ENCODE measurements at regions of chr19 and their contacts with region 1.

Region 1: DNA sequence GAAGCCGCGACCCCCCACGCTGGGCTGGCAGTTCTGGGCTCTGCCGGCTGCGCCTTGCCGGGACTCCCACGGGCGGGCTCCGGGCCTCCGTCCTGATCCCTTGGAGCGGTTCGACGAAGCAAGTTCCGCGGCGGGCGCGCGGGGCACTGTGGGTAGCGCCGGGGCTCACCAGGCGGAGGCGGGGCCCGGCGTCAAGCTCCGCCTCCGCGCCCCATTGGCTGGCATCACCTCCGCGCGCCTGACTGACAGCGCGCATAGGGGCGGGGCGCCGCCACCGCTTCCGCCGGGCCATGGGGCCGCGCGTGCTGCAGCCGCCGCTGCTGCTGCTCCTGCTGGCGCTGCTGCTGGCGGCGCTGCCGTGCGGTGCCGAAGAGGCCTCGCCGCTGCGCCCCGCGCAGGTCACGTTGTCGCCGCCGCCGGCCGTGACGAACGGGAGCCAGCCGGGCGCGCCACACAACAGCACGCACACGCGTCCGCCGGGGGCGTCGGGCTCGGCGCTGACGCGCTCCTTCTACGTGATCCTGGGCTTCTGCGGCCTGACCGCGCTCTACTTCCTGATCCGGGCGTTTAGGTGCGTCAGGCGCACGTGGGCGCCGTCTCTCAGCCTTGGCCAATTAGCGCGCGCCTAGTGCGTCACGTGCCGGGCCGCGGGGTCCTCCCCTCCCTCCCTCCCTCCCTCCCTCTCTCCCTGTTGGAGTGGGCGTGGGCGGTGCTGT is at the start of gene FAM174C:
- DNase-seq: peak; percentile 94 to 98
- ATAC-seq: peak; percentile 82 to 95 (median 85)
- H3K4me3 ChIP-seq: peak within 1 kb of the TSS; percentile 65
- H3K4me3 Mint-ChIP-seq: peak within 1 kb of the TSS; percentile 83
- H3K27ac ChIP-seq: peak within 1 kb of the TSS; percentile 91
- H3K27ac Mint-ChIP-seq: peak within 1 kb of the TSS; percentile 91 to 93
- H3K4me1 ChIP-seq: peaks cover 65% of the 10 kb centered on the region
- H3K4me1 Mint-ChIP-seq: peaks cover 40 to 57% of the 10 kb centered on the region in 2 donors
- H3K27me3 ChIP-seq: no peaks in the 10 kb centered on the region
- H3K27me3 Mint-ChIP-seq: no peaks in the 10 kb centered on the region
- CTCF ChIP-seq: no peak
- total RNA-seq, gene FAM174C: 26.6 to 33.4 (median 27.1) TPM

Region 2: DNA sequence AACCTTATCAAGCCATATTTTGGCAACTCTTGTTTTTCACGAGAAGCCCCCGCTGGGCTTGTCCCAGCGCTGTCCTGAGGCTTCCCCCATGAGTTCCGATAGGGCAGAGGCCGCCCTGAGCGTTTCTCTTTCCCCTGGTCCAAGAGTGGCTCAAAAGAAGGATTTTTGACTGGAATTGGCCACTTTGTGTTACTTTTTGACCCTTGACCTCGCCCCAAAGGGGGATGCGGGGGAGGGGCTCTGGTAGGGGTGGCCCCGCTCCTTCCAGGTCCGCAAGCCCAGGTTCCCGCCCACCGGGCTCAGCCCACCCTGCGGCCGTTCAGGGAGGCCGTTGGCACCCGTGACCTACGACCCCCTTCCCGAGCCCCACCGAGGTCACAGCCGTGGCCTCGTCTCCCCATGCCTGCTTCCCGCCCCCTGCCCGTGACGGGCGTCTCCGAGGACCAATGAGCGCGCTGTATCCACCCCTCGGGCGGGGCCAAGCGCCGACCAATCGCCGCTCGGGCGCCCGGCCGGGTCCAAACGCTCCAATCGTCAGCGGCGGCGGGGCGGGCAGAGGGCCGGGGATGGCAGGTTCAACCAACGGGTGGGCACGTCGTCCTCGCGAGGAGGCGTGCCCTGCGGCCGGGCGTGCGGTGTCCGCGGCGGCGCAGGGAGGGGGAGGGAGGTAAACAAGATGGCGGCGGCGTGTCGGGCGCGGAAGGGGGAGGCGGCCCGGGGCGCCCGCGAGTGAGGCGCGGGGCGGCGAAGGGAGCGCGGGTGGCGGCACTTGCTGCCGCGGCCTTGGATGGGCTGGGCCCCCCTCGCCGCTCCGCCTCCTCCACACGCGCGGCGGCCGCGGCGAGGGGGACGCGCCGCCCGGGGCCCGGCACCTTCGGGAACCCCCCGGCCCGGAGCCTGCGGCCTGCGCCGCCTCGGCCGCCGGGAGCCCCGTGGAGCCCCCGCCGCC is 70.0 kb before region 1 on chr19 and contains the start of gene STK11:
- intact Hi-C with region 1: no loop called
- DNase-seq: peak; percentile 98 to 100
- ATAC-seq: peak; percentile 92 to 98 (median 94)
- H3K4me3 ChIP-seq: peak within 1 kb of the TSS; percentile 55
- H3K4me3 Mint-ChIP-seq: peak within 1 kb of the TSS; percentile 96
- H3K27ac ChIP-seq: peak within 1 kb of the TSS; percentile 77
- H3K27ac Mint-ChIP-seq: peak within 1 kb of the TSS; percentile 88 to 90
- H3K4me1 ChIP-seq: peaks cover 47% of the 10 kb centered on the region
- H3K4me1 Mint-ChIP-seq: peaks cover 14 to 34% of the 10 kb centered on the region in 2 donors
- H3K27me3 ChIP-seq: no peaks in the 10 kb centered on the region
- H3K27me3 Mint-ChIP-seq: no peaks in the 10 kb centered on the region
- CTCF ChIP-seq: no peak
- total RNA-seq, gene STK11: 51.5 to 61.1 (median 54.0) TPM

Region 3: DNA sequence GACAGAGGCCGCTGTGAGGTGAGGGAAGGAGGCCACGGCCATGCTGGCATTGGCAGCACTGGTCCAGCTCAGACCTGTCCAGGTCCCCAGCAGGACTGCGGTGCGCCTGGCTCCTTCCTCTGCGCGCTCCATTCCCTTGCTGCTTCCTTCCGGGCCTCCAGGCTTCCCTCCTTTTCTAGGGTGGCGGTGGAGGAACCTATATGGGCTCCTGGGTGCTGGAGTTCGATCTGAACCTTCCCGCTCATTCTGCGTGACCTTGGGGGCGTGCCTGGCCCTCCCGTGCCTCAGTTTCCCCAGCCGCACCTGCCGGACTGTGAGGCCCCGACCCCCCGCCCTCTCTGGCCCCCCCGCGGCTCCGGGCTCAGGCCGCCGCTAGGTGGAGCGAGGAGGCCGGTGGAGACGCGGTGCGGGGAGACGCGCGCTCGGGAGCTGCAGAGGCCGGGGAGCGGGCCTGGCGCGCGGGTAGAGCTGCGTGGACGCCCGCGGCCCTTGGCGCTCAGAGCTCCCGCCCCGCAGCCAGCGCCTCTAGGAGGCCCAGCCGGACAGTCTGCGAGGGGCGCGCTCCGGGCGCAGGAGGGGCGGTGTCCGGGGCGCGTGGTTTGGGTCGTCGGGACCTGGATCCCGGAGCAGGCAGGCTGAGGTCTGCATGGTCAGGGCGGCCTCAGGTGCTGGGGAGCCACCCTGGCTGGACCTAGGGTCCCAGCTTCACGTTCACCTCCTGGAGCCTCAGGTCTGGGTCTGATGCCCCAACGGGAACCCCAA is 40.2 kb after region 1 on chr19:
- intact Hi-C with region 1: no loop called
- DNase-seq: peak in 1 of 2 donors; percentile 48
- ATAC-seq: peak in 2 of 3 donors; percentile 49 to 67
- H3K4me3 ChIP-seq: no peak overlapping the region
- H3K4me3 Mint-ChIP-seq: no peak overlapping the region
- H3K27ac ChIP-seq: no peak overlapping the region
- H3K27ac Mint-ChIP-seq: no peak overlapping the region
- H3K4me1 ChIP-seq: peaks cover 4% of the 10 kb centered on the region
- H3K4me1 Mint-ChIP-seq: no peaks in the 10 kb centered on the region
- H3K27me3 ChIP-seq: peaks cover 15% of the 10 kb centered on the region
- H3K27me3 Mint-ChIP-seq: peaks cover 8 to 12% of the 10 kb centered on the region in 2 donors
- CTCF ChIP-seq: no peak

Region 4: DNA sequence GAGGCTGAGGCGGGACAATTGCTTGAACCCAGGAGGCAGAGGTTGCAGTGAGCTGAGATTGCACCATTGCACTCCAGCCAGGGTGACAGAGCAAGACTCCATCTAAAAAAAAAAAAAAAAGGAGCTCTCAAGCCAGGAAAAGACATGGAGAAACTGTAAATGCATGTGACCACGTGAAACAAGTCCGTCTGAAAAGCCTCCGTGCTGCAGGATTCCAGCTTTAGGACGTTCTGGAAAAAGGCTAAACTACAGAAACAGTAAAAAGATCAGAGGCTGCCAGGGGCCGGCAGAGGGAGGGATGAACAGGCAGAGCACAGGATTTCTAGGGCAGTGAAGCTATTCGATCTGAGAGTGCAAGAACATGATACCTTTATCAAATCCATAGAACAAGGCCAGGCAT is 67.6 kb after region 1 on chr19:
- intact Hi-C with region 1: no loop called
- DNase-seq: no peak
- ATAC-seq: no peak
- H3K4me3 ChIP-seq: no peak overlapping the region
- H3K4me3 Mint-ChIP-seq: no peak overlapping the region
- H3K27ac ChIP-seq: no peak overlapping the region
- H3K27ac Mint-ChIP-seq: no peak overlapping the region
- H3K4me1 ChIP-seq: no peaks in the 10 kb centered on the region
- H3K4me1 Mint-ChIP-seq: no peaks in the 10 kb centered on the region
- H3K27me3 ChIP-seq: no peaks in the 10 kb centered on the region
- H3K27me3 Mint-ChIP-seq: peaks cover 0 to 2% of the 10 kb centered on the region in 2 donors
- CTCF ChIP-seq: no peak

Region 5: DNA sequence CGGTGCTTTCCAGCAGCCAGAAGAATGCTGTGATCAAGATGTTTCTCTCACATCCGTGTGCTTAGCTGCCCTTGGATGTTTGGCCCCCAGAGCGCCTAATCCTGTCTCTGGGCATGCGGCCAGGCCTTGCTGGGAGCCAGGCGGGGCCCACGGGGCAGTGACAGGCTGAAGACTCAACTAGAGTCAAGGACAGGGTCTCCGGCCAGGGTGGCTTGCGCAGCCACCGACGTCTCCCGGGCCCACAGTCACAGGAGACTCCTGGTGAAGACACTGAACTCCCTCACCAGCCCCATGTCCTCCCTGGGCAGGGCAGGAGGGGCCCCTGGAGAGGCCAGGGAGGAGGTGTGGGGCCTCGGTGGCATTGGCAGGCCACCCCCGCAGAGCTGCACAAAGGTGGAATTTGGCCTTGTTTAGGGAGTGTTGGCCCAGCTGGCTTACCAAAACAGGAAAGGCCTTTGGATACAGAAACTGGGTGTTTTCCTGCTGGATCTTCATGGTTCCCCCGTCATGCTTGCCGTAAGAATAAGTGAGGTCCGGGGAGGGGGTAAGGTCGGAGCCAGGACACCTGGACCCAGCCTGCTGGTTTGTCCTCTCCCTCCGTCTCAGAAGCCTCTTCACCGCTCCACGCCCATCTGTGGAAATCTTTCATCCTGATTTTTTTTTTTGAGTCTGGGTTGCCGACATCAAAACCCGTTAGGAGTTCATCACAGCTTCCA is 98.3 kb after region 1 on chr19:
- intact Hi-C with region 1: loop called (anchors 1 kb)
- DNase-seq: no peak
- ATAC-seq: no peak
- H3K4me3 ChIP-seq: no peak overlapping the region
- H3K4me3 Mint-ChIP-seq: no peak overlapping the region
- H3K27ac ChIP-seq: no peak overlapping the region
- H3K27ac Mint-ChIP-seq: no peak overlapping the region
- H3K4me1 ChIP-seq: no peaks in the 10 kb centered on the region
- H3K4me1 Mint-ChIP-seq: no peaks in the 10 kb centered on the region
- H3K27me3 ChIP-seq: no peaks in the 10 kb centered on the region
- H3K27me3 Mint-ChIP-seq: no peaks in the 10 kb centered on the region
- CTCF ChIP-seq: no peak

Region 6: GRCh38 chr19:1465191-1466016 is 190.0 kb after region 1 on chr19:
- intact Hi-C with region 1: no loop called
- DNase-seq: peak in 1 of 2 donors; percentile 65
- ATAC-seq: peak in 2 of 3 donors; percentile 27 to 45
- H3K4me3 ChIP-seq: no peak overlapping the region
- H3K4me3 Mint-ChIP-seq: no peak overlapping the region
- H3K27ac ChIP-seq: no peak overlapping the region
- H3K27ac Mint-ChIP-seq: no peak overlapping the region
- H3K4me1 ChIP-seq: peaks cover 38% of the 10 kb centered on the region
- H3K4me1 Mint-ChIP-seq: peaks cover 0 to 5% of the 10 kb centered on the region in 2 donors
- H3K27me3 ChIP-seq: peaks cover 13% of the 10 kb centered on the region
- H3K27me3 Mint-ChIP-seq: peaks cover 0 to 3% of the 10 kb centered on the region in 2 donors
- CTCF ChIP-seq: peak; percentile 17

Measured in natural killer cell (primary cell).